ENCODE measurements at regions of chr12 and their contacts with region 1.

Region 1: DNA sequence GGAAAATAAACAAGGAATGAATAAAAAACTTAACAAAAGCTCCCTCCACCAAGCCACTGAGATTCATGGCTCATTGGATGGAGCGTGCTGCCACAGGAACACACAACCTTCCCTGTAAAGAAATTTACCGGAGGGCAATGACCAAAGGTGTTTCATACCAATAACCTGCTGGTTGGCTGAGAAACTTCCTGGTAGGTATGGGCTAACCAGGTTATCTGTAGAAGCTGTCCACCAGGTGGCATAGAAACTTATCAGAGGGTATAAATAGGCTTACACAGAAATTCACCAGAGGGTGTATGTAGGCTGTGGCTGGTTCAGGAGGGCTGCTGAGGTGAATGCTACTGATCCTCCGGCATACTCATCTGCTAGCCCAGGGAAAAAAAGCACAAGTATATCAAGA is 27.1 kb upstream of the MTERF2 start:
- DNase-seq: peak; percentile 37 to 48
- H3K4me3 ChIP-seq: no peak overlapping the region
- H3K4me3 Mint-ChIP-seq: no peak overlapping the region
- H3K27ac Mint-ChIP-seq: no peak overlapping the region
- H3K4me1 ChIP-seq: no peaks in the 10 kb centered on the region
- H3K4me1 Mint-ChIP-seq: no peaks in the 10 kb centered on the region
- H3K27me3 ChIP-seq: no peaks in the 10 kb centered on the region
- H3K27me3 Mint-ChIP-seq: no peaks in the 10 kb centered on the region
- CTCF ChIP-seq: peak; percentile 28 to 60

Region 2: DNA sequence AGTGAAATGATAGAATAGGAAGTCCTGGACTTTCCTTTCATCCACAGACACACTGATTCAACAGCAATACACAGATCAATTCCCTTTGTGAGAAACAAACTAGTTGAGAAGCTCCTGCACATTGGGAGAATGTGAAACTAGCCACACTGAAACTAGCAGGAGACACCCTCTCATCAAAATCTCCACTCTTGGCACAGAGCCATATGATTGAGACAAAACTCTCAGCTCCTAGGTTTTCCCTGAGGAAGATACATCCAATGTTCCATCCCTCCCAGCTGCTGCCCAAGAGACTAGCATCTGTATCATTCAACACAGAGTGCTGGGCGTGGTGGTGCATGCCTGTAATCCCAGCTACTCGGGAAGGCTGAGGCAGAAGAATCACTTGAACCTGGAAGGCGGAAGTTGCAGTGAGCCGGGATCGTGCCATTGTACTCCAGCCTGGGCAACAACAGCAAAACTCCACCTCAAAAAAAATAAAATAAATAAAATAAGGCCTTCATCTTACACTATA is 24.7 kb after region 1 on chr12:
- CTCF ChIA-PET with region 1: no interaction called
- POLR2A ChIA-PET with region 1: no interaction called
- intact Hi-C with region 1: no loop called
- DNase-seq: no peak
- H3K4me3 ChIP-seq: no peak overlapping the region
- H3K4me3 Mint-ChIP-seq: no peak overlapping the region
- H3K27ac Mint-ChIP-seq: no peak overlapping the region
- H3K4me1 ChIP-seq: peaks cover 10% of the 10 kb centered on the region
- H3K4me1 Mint-ChIP-seq: no peaks in the 10 kb centered on the region
- H3K27me3 ChIP-seq: no peaks in the 10 kb centered on the region
- H3K27me3 Mint-ChIP-seq: no peaks in the 10 kb centered on the region
- CTCF ChIP-seq: no peak

Region 3: GRCh38 chr12:107093417-107094182 is 79.6 kb after region 1 on chr12 and contains the start of gene CRY1:
- CTCF ChIA-PET with region 1: no interaction called
- POLR2A ChIA-PET with region 1: no interaction called
- intact Hi-C with region 1: loop called (anchors 5 kb)
- DNase-seq: peak; percentile 94 to 96
- H3K4me3 ChIP-seq: peak within 1 kb of the TSS; percentile 49
- H3K4me3 Mint-ChIP-seq: no peak within 1 kb of the TSS
- H3K27ac Mint-ChIP-seq: no peak within 1 kb of the TSS
- H3K4me1 ChIP-seq: peaks cover 11% of the 10 kb centered on the region; the same call in 1 of the 2 replicates
- H3K4me1 Mint-ChIP-seq: peaks cover 7% of the 10 kb centered on the region
- H3K27me3 ChIP-seq: no peaks in the 10 kb centered on the region
- H3K27me3 Mint-ChIP-seq: no peaks in the 10 kb centered on the region
- CTCF ChIP-seq: no peak
- total RNA-seq, gene CRY1: 19.4 and 22.2 TPM in 2 replicates

Region 4: DNA sequence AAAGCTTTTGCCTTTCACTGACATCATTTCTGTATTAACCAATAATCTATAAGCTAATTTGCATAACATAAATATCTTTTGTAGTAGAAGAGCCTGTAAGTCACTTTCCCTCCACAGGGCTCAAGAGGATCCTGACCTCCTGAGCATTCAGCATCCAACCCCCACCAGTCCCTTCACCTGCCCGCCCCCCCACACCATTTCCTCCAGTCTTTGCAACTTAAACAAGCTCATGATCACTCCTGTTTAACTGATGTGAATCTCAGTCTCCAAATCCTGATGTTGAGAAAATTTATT is 91.3 kb after region 1 on chr12:
- CTCF ChIA-PET with region 1: no interaction called
- POLR2A ChIA-PET with region 1: no interaction called
- intact Hi-C with region 1: loop called (anchors 1 kb)
- DNase-seq: no peak
- H3K4me3 ChIP-seq: no peak overlapping the region
- H3K4me3 Mint-ChIP-seq: no peak overlapping the region
- H3K27ac Mint-ChIP-seq: no peak overlapping the region
- H3K4me1 ChIP-seq: peaks cover 5% of the 10 kb centered on the region; the same call in 1 of the 2 replicates
- H3K4me1 Mint-ChIP-seq: no peaks in the 10 kb centered on the region
- H3K27me3 ChIP-seq: no peaks in the 10 kb centered on the region
- H3K27me3 Mint-ChIP-seq: peaks cover 10% of the 10 kb centered on the region
- CTCF ChIP-seq: no peak

Region 5: DNA sequence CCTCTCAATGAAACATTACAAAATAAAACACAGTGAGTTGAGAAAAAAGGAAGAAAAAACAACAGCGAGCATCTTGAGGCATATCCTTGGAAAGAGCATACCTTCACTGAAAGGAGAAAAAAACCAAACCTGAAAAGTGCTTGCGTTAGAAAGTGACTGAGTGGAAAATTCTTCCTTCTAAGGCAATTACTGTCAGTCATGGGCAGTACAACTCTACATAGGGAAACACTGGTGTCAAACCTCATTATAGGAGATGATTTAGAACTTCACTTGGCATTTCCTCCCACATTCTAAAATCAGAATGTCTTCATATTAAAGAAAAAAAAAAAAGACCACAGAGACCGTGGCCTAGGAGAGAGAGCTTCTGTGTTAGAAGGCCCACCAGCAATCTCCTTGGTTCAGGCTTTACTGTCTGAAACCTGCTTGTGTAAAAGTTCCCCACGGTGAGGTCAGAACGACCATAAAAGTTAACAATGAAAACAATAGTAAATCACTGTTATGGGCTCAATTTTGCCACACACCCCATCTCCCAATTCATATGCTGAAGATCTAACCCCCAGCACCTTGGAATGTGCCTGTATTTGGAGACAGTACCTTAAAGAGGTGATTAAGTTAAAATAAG is 170.4 kb after region 1 on chr12:
- CTCF ChIA-PET with region 1: no interaction called
- POLR2A ChIA-PET with region 1: no interaction called
- intact Hi-C with region 1: no loop called
- DNase-seq: no peak
- H3K4me3 ChIP-seq: no peak overlapping the region
- H3K4me3 Mint-ChIP-seq: no peak overlapping the region
- H3K27ac Mint-ChIP-seq: no peak overlapping the region
- H3K4me1 ChIP-seq: no peaks in the 10 kb centered on the region
- H3K4me1 Mint-ChIP-seq: no peaks in the 10 kb centered on the region
- H3K27me3 ChIP-seq: no peaks in the 10 kb centered on the region
- H3K27me3 Mint-ChIP-seq: peaks cover 7% of the 10 kb centered on the region
- CTCF ChIP-seq: no peak